ENCODE measurements at regions of chr17 and their contacts with region 1.

Region 1: GRCh38 chr17:48908047-48908843 is at the start of gene UBE2Z:
- DNase-seq: peak; percentile 99
- ATAC-seq: peak; percentile 92 to 93
- H3K4me3 ChIP-seq: peak within 1 kb of the TSS; percentile 89
- H3K27ac ChIP-seq: peak within 1 kb of the TSS; percentile 94 to 98
- H3K4me1 ChIP-seq: peaks cover 44% of the 10 kb centered on the region
- CTCF ChIP-seq: peak; percentile 31; the same call in 2 of the 3 replicates
- EP300 ChIP-seq: 0 out of 5 replicates have a peak, but pooled peaks of 1 of the 2 experiments have one; percentile 4
- POLR2A ChIP-seq: peak; percentile 97
- RAD21 ChIP-seq: no peak
- polyA plus RNA-seq, gene UBE2Z: 174 and 196 TPM in 2 replicates

Region 2: GRCh38 chr17:48892940-48893645 is 15.2 kb before region 1 on chr17:
- CTCF ChIA-PET with region 1: interaction called, 7 read pairs
- POLR2A ChIA-PET with region 1: interaction called, 42 read pairs
- DNase-seq: no peak
- ATAC-seq: no peak
- H3K4me3 ChIP-seq: peak overlapping the region; percentile 86
- H3K27ac ChIP-seq: peak overlapping the region; percentile 89 to 92
- H3K4me1 ChIP-seq: peaks cover 26% of the 10 kb centered on the region
- CTCF ChIP-seq: no peak
- EP300 ChIP-seq: no peak
- POLR2A ChIP-seq: no peak
- RAD21 ChIP-seq: no peak

Region 3: GRCh38 chr17:50806141-50806643 is 1897.9 kb after region 1 on chr17:
- CTCF ChIA-PET with region 1: no interaction called
- POLR2A ChIA-PET with region 1: no interaction called
- DNase-seq: peak in 1 of 2 experiments; percentile 32
- ATAC-seq: peak in 1 of 2 experiments; percentile 32; a peak in 3 of 6 replicates
- H3K4me3 ChIP-seq: no peak overlapping the region
- H3K27ac ChIP-seq: peak overlapping the region in 1 of 2 experiments; percentile 11; a peak in 1 of 6 replicates
- H3K4me1 ChIP-seq: no peaks in the 10 kb centered on the region; the same call in 2 of the 3 replicates
- CTCF ChIP-seq: no peak
- EP300 ChIP-seq: no peak
- POLR2A ChIP-seq: no peak
- RAD21 ChIP-seq: no peak